ENCODE measurements at regions of chr3 and their contacts with region 1.

Region 1: GRCh38 chr3:30473374-30474051 is 132.9 kb upstream of the TGFBR2 start:
- DNase-seq: peak; percentile 23
- H3K4me3 ChIP-seq: no peak overlapping the region
- H3K27ac ChIP-seq: peak overlapping the region; percentile 76
- H3K4me1 ChIP-seq: peaks cover 71% of the 10 kb centered on the region
- H3K27me3 ChIP-seq: no peaks in the 10 kb centered on the region
- CTCF ChIP-seq: no peak

Region 2: GRCh38 chr3:30538787-30539186 is 65.3 kb after region 1 on chr3:
- intact Hi-C with region 1: loop called (anchors 2 kb)
- DNase-seq: no peak
- H3K4me3 ChIP-seq: no peak overlapping the region
- H3K27ac ChIP-seq: no peak overlapping the region
- H3K4me1 ChIP-seq: peaks cover 7% of the 10 kb centered on the region
- H3K27me3 ChIP-seq: no peaks in the 10 kb centered on the region
- CTCF ChIP-seq: no peak